Dorsolateral prefrontal cortex (tissue), 120 donors: ENCODE measurements at regions of chr16 and their contacts with region 1.

Region 1: GRCh38 chr16:55842369-55843104 is 9.6 kb upstream of the CES1 start:
- DNase-seq: peak in 2 of 10 donors; percentile 25 to 36
- H3K4me3 ChIP-seq: no peak overlapping the region
- H3K27ac ChIP-seq: no peak overlapping the region
- H3K27me3 ChIP-seq: peaks cover 0 to 9% (median 0%) of the 10 kb centered on the region in 45 donors
- CTCF ChIP-seq: peak; percentile 62 to 90 (median 80)

Region 2: GRCh38 chr16:55465077-55465896 is 377.2 kb before region 1 on chr16:
- intact Hi-C with region 1: loop called (anchors 5 kb)
- DNase-seq: peak; percentile 79 to 93 (median 88)
- H3K4me3 ChIP-seq: peak overlapping the region in 22 of 59 donors; percentile 1 to 50 (median 26)
- H3K27ac ChIP-seq: no peak overlapping the region
- H3K27me3 ChIP-seq: no peaks in the 10 kb centered on the region
- CTCF ChIP-seq: peak; percentile 99 to 100 (median 100)

Region 3: DNA sequence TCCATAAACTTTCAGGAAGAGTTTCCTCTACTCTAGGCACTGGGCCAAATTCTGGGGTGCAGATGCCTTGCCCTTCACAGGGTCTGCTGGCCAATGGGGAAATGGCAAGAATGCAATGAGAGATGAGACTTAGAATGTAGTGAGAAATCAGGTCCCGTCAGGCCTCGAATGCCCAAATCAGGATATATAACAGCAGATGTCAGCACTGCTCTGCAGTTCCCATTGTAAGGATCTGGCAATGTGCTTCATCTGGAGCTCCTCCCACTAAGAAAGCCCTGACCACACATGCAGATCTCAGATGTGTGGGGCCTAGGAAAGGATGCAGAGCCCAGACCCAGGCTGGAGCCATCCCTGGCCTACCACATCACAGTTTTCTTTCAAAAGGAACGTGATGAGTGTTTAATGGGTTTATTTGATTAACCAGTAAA is 347.5 kb before region 1 on chr16:
- intact Hi-C with region 1: no loop called
- DNase-seq: peak in 3 of 10 donors; percentile 34 to 74 (median 69)
- H3K4me3 ChIP-seq: no peak overlapping the region
- H3K27ac ChIP-seq: peak overlapping the region in 22 of 59 donors; percentile 2 to 70 (median 46)
- H3K27me3 ChIP-seq: no peaks in the 10 kb centered on the region
- CTCF ChIP-seq: peak in 55 of 56 donors; percentile 48 to 89 (median 67)

Region 4: DNA sequence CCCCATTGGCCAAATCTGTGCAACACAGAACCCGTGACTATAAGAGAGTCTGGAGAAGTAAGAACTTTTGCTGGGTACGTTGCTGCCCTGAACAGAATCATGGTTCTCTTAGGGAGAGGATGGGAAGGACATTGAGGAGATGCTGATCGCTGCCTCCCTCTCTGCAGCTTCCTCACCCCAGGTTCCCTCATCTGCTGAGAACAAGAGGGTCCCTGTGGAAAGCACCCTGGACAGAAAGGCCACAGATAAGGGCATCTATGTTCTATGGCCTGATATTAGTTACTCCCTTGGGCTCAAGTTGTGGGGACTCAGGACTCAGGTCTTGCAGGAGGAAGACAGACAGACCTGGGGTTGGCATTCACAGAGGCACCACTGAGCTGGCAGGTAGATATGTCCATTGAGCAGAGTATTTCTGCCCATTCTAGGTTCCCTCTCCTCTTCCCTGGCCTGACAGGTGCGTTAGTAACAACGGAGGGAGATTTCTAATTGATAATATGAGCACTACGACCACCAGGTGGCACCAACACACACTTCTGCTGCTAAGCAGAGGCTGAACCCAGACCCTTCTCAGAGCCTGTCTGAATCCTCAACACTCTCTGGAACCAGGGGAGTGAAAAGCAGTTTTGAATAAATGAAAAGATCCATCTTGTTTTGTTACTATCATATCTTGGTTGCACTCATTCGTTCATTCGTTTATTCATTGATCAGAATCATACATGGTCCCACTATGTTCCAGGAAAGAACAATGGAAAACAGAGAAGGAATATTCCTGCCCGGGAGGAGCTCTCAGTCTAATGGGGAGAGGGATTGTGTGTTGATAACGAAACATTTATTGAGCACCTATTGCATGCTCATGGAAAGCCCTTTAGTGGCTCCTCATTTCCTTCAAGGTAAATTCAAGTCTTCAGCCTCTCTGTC is 130.3 kb before region 1 on chr16:
- intact Hi-C with region 1: loop called (anchors 2 kb)
- DNase-seq: peak in 9 of 10 donors; percentile 54 to 79 (median 60)
- H3K4me3 ChIP-seq: no peak overlapping the region
- H3K27ac ChIP-seq: no peak overlapping the region
- H3K27me3 ChIP-seq: peaks cover 0 to 13% (median 0%) of the 10 kb centered on the region in 45 donors
- CTCF ChIP-seq: peak; percentile 53 to 92 (median 78)

Region 5: GRCh38 chr16:56013962-56014552 is 171.5 kb after region 1 on chr16:
- intact Hi-C with region 1: no loop called
- DNase-seq: peak in 1 of 10 donors; percentile 30
- H3K4me3 ChIP-seq: no peak overlapping the region
- H3K27ac ChIP-seq: no peak overlapping the region
- H3K27me3 ChIP-seq: no peaks in the 10 kb centered on the region
- CTCF ChIP-seq: no peak

Region 6: DNA sequence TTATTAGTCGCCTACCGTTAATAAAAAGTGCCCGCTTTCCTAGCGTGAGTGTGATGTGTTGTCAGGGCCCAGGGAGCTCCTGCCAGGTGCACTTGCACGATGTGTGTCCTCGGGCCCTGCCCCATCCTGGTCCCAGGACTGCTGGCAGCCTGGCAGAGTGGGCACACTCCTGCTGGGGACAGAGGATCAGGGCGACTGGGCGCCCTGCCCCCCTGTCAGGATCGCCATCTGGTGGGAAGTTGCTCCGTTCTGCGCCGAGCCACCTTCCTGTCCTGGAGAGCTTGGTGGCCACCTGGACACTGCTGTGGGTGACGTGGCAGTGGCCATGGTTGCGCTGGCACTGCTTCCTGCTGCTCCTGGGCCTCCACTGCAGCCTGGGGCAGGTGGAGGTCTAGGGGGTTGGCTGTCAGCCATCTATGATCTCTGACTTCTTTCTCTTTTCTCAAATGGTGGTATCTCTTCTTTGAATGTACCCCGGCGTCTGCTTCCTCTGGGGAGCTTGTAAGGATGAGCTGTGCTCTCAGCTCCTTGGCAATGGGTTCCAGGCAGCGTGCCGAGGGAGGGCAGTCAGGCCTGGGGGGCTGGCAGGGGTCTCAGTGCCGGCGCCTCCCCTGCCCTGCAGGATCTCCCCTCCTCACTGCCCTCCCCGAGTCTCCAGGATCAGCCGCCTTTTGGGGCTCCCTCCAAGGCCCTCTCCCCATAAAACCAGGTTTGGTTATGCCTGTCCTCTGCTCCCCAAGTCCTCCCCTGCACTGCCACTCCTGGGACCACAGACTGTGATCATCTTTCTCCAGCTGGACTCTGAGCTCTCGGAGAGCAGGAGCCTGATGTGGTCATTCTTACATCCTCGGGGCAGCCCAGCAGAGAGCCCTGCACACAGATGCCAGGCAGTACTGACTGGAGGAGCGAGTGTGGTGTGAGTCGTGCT is 505.9 kb after region 1 on chr16:
- intact Hi-C with region 1: loop called in 1 of 2 experiments (anchors 10 kb)
- DNase-seq: peak in 3 of 10 donors; percentile 26 to 39 (median 36)
- H3K4me3 ChIP-seq: no peak overlapping the region
- H3K27ac ChIP-seq: peak overlapping the region in 56 of 59 donors; percentile 0 to 78 (median 60)
- H3K27me3 ChIP-seq: no peaks in the 10 kb centered on the region
- CTCF ChIP-seq: no peak